Activated CD4-positive, alpha-beta T cell treated with anti-CD3 and anti-CD28 coated beads for 36 hours (primary cell): ENCODE measurements at regions of chr5 and their contacts with region 1.

Region 1: GRCh38 chr5:83430130-83431010 is 41.2 kb upstream of the VCAN start:
- DNase-seq: peak; percentile 75
- ATAC-seq: peak; percentile 81
- H3K4me3 Mint-ChIP-seq: no peak overlapping the region
- H3K27ac Mint-ChIP-seq: no peak overlapping the region
- H3K4me1 Mint-ChIP-seq: no peaks in the 10 kb centered on the region
- H3K27me3 Mint-ChIP-seq: no peaks in the 10 kb centered on the region

Region 2: GRCh38 chr5:82312373-82312856 is 1118.0 kb before region 1 on chr5:
- CTCF ChIA-PET with region 1: no interaction called
- POLR2A ChIA-PET with region 1: no interaction called
- intact Hi-C with region 1: loop called (anchors 1 to 5 kb)
- DNase-seq: peak; percentile 69
- ATAC-seq: peak; percentile 61
- H3K4me3 Mint-ChIP-seq: no peak overlapping the region
- H3K27ac Mint-ChIP-seq: no peak overlapping the region
- H3K4me1 Mint-ChIP-seq: no peaks in the 10 kb centered on the region
- H3K27me3 Mint-ChIP-seq: peaks cover 4% of the 10 kb centered on the region